ENCODE measurements at regions of chr5 and their contacts with region 1.

Region 1: DNA sequence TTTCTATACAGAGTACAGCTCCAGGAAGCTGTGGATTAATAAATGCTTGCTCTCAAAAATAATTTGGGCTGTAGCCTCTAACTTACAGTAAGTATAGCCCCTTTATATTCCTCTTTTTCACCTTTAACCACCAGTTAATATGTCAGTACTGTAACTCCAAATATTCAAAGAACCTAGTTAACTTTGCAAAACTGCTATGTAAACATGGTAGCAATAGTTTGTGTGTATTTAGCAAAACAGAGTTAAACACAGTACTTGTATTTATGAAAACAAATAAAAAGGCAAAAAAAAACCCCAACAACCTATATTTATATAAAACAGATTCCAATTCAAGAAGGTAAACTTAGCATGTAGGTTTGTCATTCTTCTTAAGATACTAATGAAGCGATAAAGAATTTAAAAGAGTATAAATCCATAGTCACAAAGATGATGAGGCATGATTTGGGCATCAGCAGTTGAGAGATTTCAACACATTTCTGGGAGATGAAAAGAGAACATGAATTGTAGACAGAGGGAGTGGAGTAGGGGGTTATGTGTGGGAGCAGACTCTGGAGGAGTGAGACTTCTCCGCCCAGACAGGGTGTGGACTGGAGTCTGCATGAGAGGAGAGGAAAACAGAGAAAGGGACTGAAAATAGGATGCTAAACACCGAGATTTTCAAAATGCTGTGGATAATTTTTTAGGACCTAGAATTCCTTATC is 47.0 kb upstream of the F2RL1 start:
- DNase-seq: no peak
- H3K4me3 ChIP-seq: no peak overlapping the region
- H3K27ac ChIP-seq: no peak overlapping the region
- H3K4me1 ChIP-seq: peaks cover 6% of the 10 kb centered on the region
- H3K27me3 ChIP-seq: no peaks in the 10 kb centered on the region
- CTCF ChIP-seq: no peak
- POLR2A ChIP-seq: no peak

Region 2: DNA sequence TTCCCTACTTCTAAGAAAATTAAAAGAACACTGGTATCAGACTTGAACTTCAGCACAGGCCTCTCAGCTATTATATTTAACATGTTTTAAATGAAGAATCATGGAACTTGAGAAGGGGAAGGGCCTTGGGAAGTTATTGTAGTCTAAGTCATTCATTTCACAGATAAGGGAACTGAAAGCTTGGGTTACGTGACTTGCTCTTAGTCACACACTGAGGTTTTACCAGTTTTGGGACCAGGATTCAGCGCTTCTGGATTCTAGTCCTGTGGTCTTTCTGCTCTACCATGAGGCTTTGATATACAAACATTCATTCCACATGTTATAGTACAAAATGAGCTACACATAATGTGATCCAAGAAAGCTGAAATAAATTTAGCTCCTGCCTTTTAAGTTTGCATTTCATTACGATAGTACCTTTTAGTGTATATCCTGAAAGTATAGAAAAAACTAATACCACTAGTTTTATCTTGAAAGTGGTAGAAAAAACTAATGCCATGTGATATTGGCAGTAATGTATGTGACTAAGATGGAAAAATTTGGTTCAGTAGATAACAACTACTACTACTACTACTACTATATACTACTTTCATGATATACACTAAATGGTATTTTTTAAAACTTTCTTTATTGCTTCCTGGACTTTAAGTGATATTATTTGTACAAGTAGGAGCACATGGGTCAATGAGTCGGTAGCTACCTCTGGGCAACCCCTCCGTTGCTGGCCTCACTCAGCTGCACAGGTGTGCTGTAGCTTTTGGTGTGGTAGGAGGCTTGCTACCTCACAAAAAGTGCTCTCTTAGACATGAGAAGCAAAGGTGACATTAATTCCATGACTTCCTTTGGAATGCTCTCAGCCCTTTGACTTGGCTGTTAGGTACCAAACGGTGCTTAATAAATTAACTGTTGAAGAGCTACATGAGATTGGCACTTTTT is 189.4 kb before region 1 on chr5:
- CTCF ChIA-PET with region 1: interaction called, 23 read pairs
- POLR2A ChIA-PET with region 1: no interaction called
- dilution Hi-C with region 1: no loop called
- intact Hi-C with region 1: no loop called
- DNase-seq: no peak
- H3K4me3 ChIP-seq: no peak overlapping the region
- H3K27ac ChIP-seq: no peak overlapping the region
- H3K4me1 ChIP-seq: no peaks in the 10 kb centered on the region
- H3K27me3 ChIP-seq: peaks cover 4 to 8% of the 10 kb centered on the region in 2 experiments
- CTCF ChIP-seq: no peak
- POLR2A ChIP-seq: no peak

Region 3: DNA sequence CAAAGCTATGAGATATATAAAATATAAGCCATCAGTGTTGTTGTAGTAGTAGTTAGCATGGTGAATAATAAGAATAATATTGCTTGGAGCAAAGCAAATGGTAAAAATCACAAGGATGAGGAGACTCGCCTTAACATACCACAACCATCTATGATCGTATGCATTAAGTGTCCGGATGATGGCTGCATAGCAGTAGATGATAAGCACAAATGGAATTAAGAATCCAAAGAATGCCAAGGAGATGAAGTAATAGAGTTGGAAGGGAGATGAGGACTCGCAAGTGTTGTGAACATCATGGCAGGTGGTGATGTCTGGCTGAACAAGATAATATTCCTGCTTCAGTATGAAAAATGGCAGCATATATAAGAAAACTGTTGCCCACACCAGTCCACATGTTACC is 154.2 kb before region 1 on chr5:
- CTCF ChIA-PET with region 1: interaction called, 10 read pairs
- POLR2A ChIA-PET with region 1: no interaction called
- dilution Hi-C with region 1: no loop called
- intact Hi-C with region 1: no loop called
- DNase-seq: no peak
- H3K4me3 ChIP-seq: no peak overlapping the region
- H3K27ac ChIP-seq: no peak overlapping the region
- H3K4me1 ChIP-seq: no peaks in the 10 kb centered on the region
- H3K27me3 ChIP-seq: no peaks in the 10 kb centered on the region
- CTCF ChIP-seq: no peak
- POLR2A ChIP-seq: no peak

Region 4: DNA sequence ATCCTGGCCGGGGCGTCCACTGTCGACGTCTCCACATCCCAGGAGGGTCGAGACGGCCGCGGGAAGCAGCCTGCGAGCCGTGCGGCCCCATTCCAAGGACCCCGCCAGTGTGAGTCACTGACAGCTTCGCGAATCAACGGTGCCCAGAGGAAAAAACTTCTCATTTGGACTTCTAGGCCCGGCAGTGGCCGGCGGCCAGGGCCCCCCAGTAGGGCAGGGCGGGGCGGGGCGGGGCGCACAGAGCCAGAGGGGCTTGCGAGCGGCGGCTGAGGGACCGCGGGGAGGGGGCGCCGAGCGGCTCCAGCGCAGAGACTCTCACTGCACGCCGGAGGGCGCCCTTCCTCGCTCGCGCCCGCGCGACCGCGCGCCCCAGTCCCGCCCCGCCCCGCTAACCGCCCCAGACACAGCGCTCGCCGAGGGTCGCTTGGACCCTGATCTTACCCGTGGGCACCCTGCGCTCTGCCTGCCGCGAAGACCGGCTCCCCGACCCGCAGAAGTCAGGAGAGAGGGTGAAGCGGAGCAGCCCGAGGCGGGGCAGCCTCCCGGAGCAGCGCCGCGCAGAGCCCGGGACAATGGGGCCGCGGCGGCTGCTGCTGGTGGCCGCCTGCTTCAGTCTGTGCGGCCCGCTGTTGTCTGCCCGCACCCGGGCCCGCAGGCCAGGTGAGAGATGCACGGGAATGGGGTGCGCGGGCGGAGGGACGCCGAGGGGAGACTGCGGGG is 56.0 kb before region 1 on chr5 and contains the start of gene F2R:
- CTCF ChIA-PET with region 1: interaction called, 79 read pairs
- POLR2A ChIA-PET with region 1: interaction called, 10 read pairs
- dilution Hi-C with region 1: no loop called
- intact Hi-C with region 1: loop called (anchors 1 kb)
- DNase-seq: peak; percentile 94
- H3K4me3 ChIP-seq: peak within 1 kb of the TSS; percentile 81 to 100 (median 99)
- H3K27ac ChIP-seq: peak within 1 kb of the TSS; percentile 89
- H3K4me1 ChIP-seq: peaks cover 30% of the 10 kb centered on the region
- H3K27me3 ChIP-seq: no peaks in the 10 kb centered on the region
- CTCF ChIP-seq: peak; percentile 44 to 74
- POLR2A ChIP-seq: no peak
- total RNA-seq, gene F2R: 342 and 393 TPM in 2 replicates

Region 5: GRCh38 chr5:76790632-76791290 is 18.9 kb after region 1 on chr5:
- CTCF ChIA-PET with region 1: interaction called, 35 read pairs
- POLR2A ChIA-PET with region 1: no interaction called
- dilution Hi-C with region 1: no loop called
- intact Hi-C with region 1: no loop called
- DNase-seq: peak; percentile 98
- H3K4me3 ChIP-seq: no peak overlapping the region
- H3K27ac ChIP-seq: peak overlapping the region; percentile 94
- H3K4me1 ChIP-seq: peaks cover 55% of the 10 kb centered on the region
- H3K27me3 ChIP-seq: no peaks in the 10 kb centered on the region
- CTCF ChIP-seq: no peak
- POLR2A ChIP-seq: peak; percentile 31

Region 6: GRCh38 chr5:76831110-76831452 is 59.2 kb after region 1 on chr5:
- CTCF ChIA-PET with region 1: interaction called, 12 read pairs
- POLR2A ChIA-PET with region 1: no interaction called
- dilution Hi-C with region 1: no loop called
- intact Hi-C with region 1: no loop called
- DNase-seq: peak; percentile 89
- H3K4me3 ChIP-seq: no peak overlapping the region
- H3K27ac ChIP-seq: peak overlapping the region; percentile 82
- H3K4me1 ChIP-seq: peaks cover 13% of the 10 kb centered on the region
- H3K27me3 ChIP-seq: no peaks in the 10 kb centered on the region
- CTCF ChIP-seq: no peak
- POLR2A ChIP-seq: no peak

Measured in endothelial cell of umbilical vein (primary cell).